Dendritic cell treated with granulocyte-macrophage colony-stimulating factor and Interleukin-4, amounts not matched to agents 40 ng/mL and 50 ng/mL, for 4 days (primary cell): ENCODE measurements at regions of chr2 and their contacts with region 1.

Region 1: GRCh38 chr2:164737612-164738081 is 104.0 kb downstream of the COBLL1 start:
- H3K4me3 Mint-ChIP-seq: no peak overlapping the region
- H3K27ac Mint-ChIP-seq: no peak overlapping the region
- H3K4me1 Mint-ChIP-seq: no peaks in the 10 kb centered on the region
- H3K27me3 Mint-ChIP-seq: no peaks in the 10 kb centered on the region

Region 2: GRCh38 chr2:164369366-164369765 is 368.3 kb before region 1 on chr2:
- intact Hi-C with region 1: no loop called
- H3K4me3 Mint-ChIP-seq: no peak overlapping the region
- H3K27ac Mint-ChIP-seq: no peak overlapping the region
- H3K4me1 Mint-ChIP-seq: no peaks in the 10 kb centered on the region
- H3K27me3 Mint-ChIP-seq: no peaks in the 10 kb centered on the region

Region 3: DNA sequence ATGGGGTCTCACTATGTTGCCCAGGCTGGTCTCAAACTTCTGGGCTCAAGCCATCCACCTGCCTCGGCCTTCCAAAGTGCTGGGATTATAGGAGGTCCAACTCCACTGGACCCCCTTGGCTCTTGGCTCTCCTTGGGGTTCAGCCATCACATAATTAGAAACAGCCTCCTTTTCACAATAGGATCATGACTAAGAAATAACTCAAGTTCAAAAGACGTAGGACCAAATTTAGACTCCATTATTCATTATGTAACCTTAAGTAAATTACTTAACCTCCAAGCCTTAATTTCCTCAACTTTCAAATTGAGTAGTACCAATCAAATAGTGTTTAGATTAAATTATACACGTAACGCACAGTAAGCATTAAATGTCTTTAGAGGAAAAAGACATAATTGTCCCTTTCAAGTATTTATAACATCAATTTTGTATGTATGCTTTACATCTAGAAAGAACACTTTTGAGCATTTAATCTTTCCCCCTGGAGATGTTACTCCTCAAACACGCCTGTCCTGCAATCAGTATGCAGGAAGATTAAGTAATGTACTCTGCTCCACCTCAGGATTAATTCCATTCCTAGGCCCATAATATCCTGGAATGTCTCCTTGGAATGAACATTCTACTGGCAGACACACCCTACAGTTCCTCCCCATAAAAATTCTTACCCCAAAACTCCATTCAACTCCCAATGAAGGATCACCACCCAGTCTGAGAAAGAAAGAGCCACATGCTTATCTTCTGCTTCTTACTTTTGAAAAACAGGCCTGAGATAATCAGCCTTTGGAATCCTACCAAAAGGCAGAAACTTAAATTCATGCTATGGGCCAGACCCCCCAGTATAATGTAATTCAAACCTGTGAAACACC is 54.9 kb after region 1 on chr2:
- intact Hi-C with region 1: no loop called
- H3K4me3 Mint-ChIP-seq: no peak overlapping the region
- H3K27ac Mint-ChIP-seq: no peak overlapping the region
- H3K4me1 Mint-ChIP-seq: peaks cover 3% of the 10 kb centered on the region
- H3K27me3 Mint-ChIP-seq: no peaks in the 10 kb centered on the region

Region 4: DNA sequence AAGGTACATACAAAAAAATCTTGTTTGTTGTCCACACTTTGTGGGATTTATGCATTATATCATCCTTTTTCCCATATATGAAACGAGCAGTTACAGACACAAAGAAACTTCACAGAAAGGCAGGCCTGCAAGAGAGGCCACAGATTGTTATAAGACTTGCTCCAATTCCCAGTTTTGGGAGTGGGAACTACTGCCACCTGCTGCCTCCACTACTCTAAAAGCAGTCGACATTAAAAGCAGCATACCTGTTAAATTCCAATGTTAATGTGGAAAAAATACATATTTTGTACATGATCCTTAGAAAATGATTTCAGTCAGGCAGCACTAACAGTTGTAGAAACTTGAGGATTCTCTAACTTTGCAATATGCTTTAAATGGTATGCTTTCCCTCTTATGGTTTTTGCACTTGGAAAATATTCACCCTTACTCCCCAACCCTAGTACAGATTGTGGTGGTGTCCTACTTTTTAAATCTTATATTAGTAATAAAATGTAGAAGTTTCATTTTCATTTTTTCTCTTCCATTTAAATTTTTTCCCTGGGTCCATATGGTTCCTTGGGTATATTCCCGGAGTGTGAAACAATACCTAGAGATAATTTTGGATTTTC is 179.8 kb after region 1 on chr2:
- intact Hi-C with region 1: loop called (anchors 1 kb)
- H3K4me3 Mint-ChIP-seq: no peak overlapping the region
- H3K27ac Mint-ChIP-seq: no peak overlapping the region
- H3K4me1 Mint-ChIP-seq: peaks cover 7% of the 10 kb centered on the region
- H3K27me3 Mint-ChIP-seq: no peaks in the 10 kb centered on the region

Region 5: DNA sequence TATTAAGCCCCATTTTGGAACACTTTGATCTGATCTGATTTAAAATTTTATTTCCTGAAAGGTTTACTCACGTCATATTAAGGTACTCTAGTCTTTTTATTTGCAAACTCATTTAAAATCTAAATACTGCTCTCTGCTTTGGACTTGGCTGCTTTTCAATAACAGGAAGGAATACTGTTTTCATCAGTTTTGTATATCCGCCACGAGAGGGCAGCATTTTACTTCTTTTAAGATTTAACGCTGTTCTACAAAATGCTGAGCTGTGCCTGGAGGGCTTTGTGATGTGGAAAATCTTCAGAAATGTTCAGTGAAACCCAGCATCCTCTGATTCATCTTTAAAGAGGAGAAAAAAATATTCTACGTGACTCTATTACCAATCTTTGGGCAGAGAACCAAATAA is 255.2 kb after region 1 on chr2:
- intact Hi-C with region 1: loop called (anchors 2 kb)
- H3K4me3 Mint-ChIP-seq: no peak overlapping the region
- H3K27ac Mint-ChIP-seq: no peak overlapping the region
- H3K4me1 Mint-ChIP-seq: peaks cover 5% of the 10 kb centered on the region
- H3K27me3 Mint-ChIP-seq: no peaks in the 10 kb centered on the region

Region 6: DNA sequence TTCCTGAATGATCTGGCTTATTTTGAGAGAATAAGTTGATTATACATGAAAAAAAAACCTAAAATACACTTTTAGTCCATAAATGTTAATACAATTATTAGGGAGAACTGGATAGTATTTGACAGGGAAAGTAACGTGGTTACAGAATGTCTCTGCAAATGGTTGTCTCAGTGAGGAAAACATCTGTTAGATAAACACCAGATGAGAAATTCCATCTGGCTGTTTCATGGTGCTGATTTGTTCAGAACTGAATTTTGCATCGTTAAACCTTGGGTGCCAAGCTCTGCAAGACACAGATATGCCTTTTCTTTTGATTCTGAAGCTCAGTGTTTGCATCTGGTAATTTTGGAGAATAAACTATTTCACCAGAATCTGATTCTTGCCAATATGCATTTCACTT is 375.8 kb after region 1 on chr2:
- intact Hi-C with region 1: no loop called
- H3K4me3 Mint-ChIP-seq: no peak overlapping the region
- H3K27ac Mint-ChIP-seq: no peak overlapping the region
- H3K4me1 Mint-ChIP-seq: no peaks in the 10 kb centered on the region
- H3K27me3 Mint-ChIP-seq: no peaks in the 10 kb centered on the region

Region 7: DNA sequence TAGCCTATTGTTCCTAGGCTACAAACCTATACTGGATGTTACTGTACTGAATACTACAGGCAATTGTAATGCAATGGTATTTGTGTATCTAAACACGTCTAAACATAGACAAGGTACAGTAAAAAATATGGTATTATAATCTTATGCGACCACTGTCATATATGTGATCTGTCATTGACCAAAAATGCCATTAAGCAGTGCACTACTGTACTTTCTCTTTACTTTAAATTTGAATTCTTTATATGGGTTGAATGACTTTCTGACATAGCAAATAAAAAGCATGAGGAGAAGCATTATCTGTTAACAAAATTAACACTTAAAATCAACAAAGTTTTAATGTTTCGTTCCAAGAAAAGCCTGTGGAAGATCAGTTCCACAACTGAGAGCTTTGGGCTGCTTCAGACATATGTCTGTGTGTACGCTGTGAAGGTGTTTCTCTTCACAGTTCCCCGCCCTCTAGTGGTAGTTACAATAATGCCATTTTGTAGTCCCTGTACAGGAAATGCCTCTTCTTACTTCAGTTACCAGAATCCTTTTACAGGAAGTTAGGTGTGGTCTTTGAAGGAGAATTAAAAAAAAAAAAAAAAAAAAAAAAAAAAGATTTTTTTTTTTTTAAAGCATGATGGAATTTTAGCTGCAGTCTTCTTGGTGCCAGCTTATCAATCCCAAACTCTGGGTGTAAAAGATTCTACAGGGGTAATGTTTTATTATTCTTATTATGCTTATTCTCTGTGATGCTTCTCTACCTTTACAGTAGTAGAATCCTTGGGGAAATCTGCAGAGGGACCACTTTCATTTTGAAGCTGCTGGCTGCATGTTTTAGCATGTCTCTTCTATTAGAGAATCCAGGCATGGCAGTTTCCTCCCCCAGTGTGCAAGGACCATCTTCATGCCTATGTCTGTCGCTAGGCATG is 556.0 kb after region 1 on chr2:
- intact Hi-C with region 1: loop called (anchors 10 kb)
- H3K4me3 Mint-ChIP-seq: no peak overlapping the region
- H3K27ac Mint-ChIP-seq: no peak overlapping the region
- H3K4me1 Mint-ChIP-seq: no peaks in the 10 kb centered on the region
- H3K27me3 Mint-ChIP-seq: no peaks in the 10 kb centered on the region